ENCODE measurements at regions of chr3 and their contacts with region 1.

Region 1: GRCh38 chr3:159252772-159253384 is 451.0 kb downstream of the MFSD1 start:
- DNase-seq: peak; percentile 80
- H3K4me3 ChIP-seq: no peak overlapping the region
- H3K27ac ChIP-seq: no peak overlapping the region
- H3K4me1 ChIP-seq: peaks cover 6% of the 10 kb centered on the region
- H3K27me3 ChIP-seq: peaks cover 0 to 6% of the 10 kb centered on the region in 2 experiments
- CTCF ChIP-seq: peak; percentile 53 to 57
- POLR2A ChIP-seq: no peak

Region 2: GRCh38 chr3:158845765-158846350 is 407.0 kb before region 1 on chr3:
- CTCF ChIA-PET with region 1: interaction called, 249 read pairs
- POLR2A ChIA-PET with region 1: no interaction called
- dilution Hi-C with region 1: no loop called
- intact Hi-C with region 1: loop called (anchors 1 kb)
- DNase-seq: peak; percentile 30
- H3K4me3 ChIP-seq: no peak overlapping the region
- H3K27ac ChIP-seq: no peak overlapping the region
- H3K4me1 ChIP-seq: no peaks in the 10 kb centered on the region
- H3K27me3 ChIP-seq: no peaks in the 10 kb centered on the region
- CTCF ChIP-seq: peak; percentile 49 to 60
- POLR2A ChIP-seq: no peak

Region 3: DNA sequence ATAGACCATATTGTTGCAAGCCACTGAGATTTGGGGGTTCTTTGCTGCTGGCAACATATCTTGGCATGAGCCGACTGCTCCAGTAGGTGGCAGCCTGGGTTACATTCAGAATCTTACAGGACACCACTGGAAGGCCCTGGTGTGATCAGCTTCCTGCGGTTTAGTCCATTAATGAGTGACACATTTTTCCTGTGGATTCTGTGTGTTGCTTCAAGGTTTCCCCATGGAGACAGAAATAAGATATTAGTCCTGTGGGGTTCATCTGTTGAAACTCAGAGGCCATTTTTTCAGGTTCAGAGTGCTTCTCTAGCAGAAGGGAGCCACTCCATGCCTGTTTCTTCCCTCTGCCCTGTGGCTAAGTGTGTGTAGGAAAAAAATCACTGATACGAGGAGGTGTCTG is 334.9 kb before region 1 on chr3:
- CTCF ChIA-PET with region 1: interaction called, 135 read pairs
- POLR2A ChIA-PET with region 1: no interaction called
- dilution Hi-C with region 1: loop called (anchors 25 kb)
- intact Hi-C with region 1: loop called (anchors 1 kb)
- DNase-seq: peak; percentile 83
- H3K4me3 ChIP-seq: no peak overlapping the region
- H3K27ac ChIP-seq: peak overlapping the region; percentile 61
- H3K4me1 ChIP-seq: peaks cover 4% of the 10 kb centered on the region
- H3K27me3 ChIP-seq: no peaks in the 10 kb centered on the region
- CTCF ChIP-seq: peak; percentile 82 to 84
- POLR2A ChIP-seq: no peak

Region 4: DNA sequence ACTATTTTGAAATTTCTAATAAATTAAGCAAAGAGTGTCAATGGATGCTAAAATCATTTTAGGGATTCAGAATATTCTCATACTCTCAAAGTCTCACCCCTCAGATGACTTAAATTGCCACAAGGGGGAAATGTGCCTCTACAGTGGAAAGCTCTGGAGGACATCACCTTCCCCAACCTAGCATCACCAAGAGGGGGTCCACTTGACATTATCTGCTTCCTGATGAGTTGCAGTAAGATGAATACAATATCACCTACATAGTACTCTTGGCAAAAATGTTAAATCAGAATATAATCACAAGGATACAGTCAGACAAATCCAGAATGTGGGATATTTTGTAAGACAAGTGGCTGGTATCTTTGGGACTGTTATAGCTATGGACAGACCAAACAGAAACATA is 160.9 kb before region 1 on chr3:
- CTCF ChIA-PET with region 1: interaction called, 11 read pairs
- POLR2A ChIA-PET with region 1: no interaction called
- dilution Hi-C with region 1: no loop called
- intact Hi-C with region 1: loop called (anchors 5 kb)
- DNase-seq: no peak
- H3K4me3 ChIP-seq: no peak overlapping the region
- H3K27ac ChIP-seq: no peak overlapping the region
- H3K4me1 ChIP-seq: no peaks in the 10 kb centered on the region
- H3K27me3 ChIP-seq: no peaks in the 10 kb centered on the region
- CTCF ChIP-seq: no peak
- POLR2A ChIP-seq: no peak

Region 5: DNA sequence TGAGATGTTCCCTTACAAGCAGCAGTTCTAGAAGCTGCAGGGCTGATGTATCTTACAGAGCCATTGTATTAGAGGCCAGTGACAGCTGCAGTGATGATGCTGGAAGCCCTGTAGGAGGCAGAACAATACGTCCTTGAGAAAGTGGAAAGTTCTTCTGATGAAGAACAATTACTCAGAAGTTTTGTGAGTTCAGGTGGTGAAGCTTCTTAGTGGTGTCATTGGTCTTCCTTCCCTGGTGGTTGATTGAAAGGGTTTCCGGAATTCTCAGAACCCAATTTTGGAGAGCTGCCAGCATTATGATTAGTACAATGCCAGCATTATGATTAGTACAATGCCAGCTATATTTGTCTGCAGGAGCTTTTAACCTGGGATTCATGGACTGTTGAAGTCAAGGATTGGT is 94.7 kb before region 1 on chr3:
- CTCF ChIA-PET with region 1: interaction called, 41 read pairs
- POLR2A ChIA-PET with region 1: no interaction called
- dilution Hi-C with region 1: no loop called
- intact Hi-C with region 1: loop called (anchors 1 kb)
- DNase-seq: peak; percentile 88
- H3K4me3 ChIP-seq: no peak overlapping the region
- H3K27ac ChIP-seq: peak overlapping the region; percentile 48
- H3K4me1 ChIP-seq: peaks cover 15% of the 10 kb centered on the region
- H3K27me3 ChIP-seq: no peaks in the 10 kb centered on the region
- CTCF ChIP-seq: peak; percentile 30 to 42
- POLR2A ChIP-seq: no peak

Region 6: GRCh38 chr3:159191443-159191842 is 61.4 kb before region 1 on chr3:
- CTCF ChIA-PET with region 1: interaction called, 16 read pairs
- POLR2A ChIA-PET with region 1: no interaction called
- dilution Hi-C with region 1: no loop called
- intact Hi-C with region 1: loop called (anchors 1 kb)
- DNase-seq: peak; percentile 89
- H3K4me3 ChIP-seq: no peak overlapping the region
- H3K27ac ChIP-seq: peak overlapping the region; percentile 52
- H3K4me1 ChIP-seq: peaks cover 28% of the 10 kb centered on the region
- H3K27me3 ChIP-seq: no peaks in the 10 kb centered on the region
- CTCF ChIP-seq: no peak
- POLR2A ChIP-seq: no peak

Measured in endothelial cell of umbilical vein (primary cell).